ENCODE measurements at regions of chr18 and their contacts with region 1.

Region 1: DNA sequence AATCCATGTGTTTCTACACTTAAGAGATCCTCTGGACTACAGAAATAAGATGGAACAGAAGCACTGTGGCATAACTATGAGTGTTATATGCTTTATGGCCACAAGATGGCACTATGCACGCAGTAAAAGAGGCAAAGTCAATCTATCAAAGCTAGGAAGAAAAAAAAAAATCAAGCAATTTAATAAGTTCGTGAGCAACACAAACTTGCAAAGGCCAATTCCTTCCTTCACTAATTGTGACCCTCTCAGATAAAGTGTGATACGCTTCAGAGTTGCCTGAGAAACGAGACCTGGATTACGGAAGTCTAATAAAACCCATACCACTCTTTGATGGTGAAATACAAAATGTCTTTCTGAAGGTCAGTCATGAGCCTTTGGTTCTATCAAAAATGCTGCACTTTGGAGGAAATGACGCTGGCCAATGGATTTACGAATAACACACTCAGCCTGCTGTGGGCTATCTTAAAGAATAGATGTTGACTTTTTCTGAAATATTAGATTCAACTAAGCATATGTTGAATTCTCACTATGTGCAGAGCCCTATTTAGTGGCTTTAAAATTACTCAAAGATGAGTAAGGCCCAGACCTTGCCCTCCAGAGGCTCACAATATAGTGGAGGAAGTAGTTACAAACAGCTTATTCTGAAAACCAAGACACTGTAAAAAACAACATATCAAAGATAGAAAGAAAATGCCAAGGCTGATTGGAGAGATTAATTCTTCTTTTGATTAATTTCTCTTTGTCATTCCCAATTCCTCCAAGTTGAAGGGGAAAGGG is 35.5 kb upstream of the TTR start:
- DNase-seq: peak; percentile 48 to 74 (median 54)
- ATAC-seq: peak; percentile 89
- H3K4me3 ChIP-seq: no peak overlapping the region
- H3K27ac ChIP-seq: no peak overlapping the region
- H3K4me1 ChIP-seq: no peaks in the 10 kb centered on the region
- H3K27me3 ChIP-seq: no peaks in the 10 kb centered on the region
- CTCF ChIP-seq: peak; percentile 53 to 93 (median 84)
- POLR2A ChIP-seq: no peak

Region 2: DNA sequence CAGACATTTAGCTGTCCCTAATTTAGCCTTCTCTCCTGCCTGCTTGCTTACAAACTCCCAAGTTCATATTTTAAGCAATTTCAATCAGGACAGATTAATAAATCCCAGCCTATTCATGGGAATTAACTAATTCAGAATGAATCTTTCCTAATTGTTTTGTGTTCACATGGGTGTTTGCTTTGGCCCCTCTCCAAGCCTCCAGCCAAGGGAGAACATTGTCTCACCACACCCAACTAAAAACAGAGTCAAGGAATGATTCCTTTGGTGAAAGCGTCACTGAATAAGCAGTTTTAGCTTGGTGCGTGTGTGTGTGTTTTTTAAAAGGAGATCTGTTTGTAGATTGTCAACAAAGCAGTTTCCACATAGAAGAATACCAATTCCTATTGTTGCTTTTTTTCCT is 281.2 kb before region 1 on chr18:
- intact Hi-C with region 1: no loop called
- DNase-seq: peak; percentile 22 to 70 (median 42)
- ATAC-seq: peak; percentile 50
- H3K4me3 ChIP-seq: no peak overlapping the region
- H3K27ac ChIP-seq: peak overlapping the region in 2 of 4 donors; percentile 25 to 34
- H3K4me1 ChIP-seq: peaks cover 7% of the 10 kb centered on the region
- H3K27me3 ChIP-seq: no peaks in the 10 kb centered on the region
- CTCF ChIP-seq: no peak
- POLR2A ChIP-seq: no peak

Region 3: DNA sequence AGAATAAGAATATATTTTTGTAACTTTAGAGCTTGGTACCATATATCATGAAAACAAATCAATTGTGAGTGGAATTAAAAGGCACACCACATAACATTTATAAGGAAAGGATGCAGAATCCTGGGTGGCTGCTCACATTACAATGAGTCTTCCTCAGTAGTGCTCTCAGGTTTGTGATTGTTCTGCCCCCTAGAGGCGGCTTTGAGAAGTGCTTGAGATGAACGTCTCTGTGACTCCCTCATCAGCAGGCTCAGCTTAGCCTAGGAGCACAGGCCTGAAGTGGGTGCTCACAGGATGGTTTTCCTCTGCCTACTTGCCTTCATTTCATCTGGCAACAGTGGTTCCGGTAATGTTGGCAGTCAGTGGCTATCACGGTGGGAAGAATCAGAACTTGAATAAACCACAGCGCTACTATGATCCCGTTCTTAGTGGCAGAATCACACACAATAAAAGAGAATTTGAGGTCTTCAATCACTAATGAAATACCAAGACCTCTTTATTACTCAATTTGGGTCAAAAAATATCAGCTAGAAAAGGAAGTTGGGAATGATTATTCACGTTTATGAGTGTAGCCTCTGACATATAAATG is 166.3 kb after region 1 on chr18:
- intact Hi-C with region 1: loop called (anchors 10 kb)
- DNase-seq: peak; percentile 79 to 89 (median 84)
- ATAC-seq: peak; percentile 85
- H3K4me3 ChIP-seq: no peak overlapping the region
- H3K27ac ChIP-seq: no peak overlapping the region
- H3K4me1 ChIP-seq: peaks cover 8% of the 10 kb centered on the region
- H3K27me3 ChIP-seq: no peaks in the 10 kb centered on the region
- CTCF ChIP-seq: peak; percentile 61 to 90 (median 73)
- POLR2A ChIP-seq: no peak

Region 4: DNA sequence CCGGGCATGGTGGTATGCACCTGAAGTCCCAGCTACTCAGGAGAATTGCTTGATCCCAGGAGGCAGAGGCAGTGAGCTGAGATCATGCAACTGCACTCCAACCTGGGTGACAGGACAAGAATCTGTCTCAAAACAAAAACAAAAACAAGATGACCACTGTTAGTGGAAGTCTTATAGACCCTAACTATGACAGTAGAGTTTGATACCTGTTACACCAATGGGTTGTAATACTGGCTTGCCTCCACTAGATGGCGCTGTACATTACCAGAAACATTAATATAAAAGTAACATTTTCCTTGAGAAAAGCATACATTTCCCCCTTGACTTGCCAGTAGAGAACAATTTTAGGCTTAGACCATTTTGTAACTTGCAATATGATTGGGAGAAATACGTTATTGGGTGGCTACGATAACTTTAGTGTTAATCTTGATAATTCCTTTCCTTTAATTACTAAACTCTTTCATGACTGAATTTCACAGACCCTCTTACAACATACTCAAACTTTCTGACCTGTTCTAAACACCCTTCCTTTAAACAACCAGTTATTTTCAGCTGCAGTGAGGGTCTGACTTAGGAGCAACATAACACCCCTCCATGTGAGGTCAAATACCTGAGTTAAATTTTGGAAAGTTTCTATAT is 185.1 kb after region 1 on chr18:
- intact Hi-C with region 1: no loop called
- DNase-seq: peak; percentile 48 to 70 (median 54)
- ATAC-seq: peak; percentile 69
- H3K4me3 ChIP-seq: no peak overlapping the region
- H3K27ac ChIP-seq: no peak overlapping the region
- H3K4me1 ChIP-seq: peaks cover 14% of the 10 kb centered on the region
- H3K27me3 ChIP-seq: no peaks in the 10 kb centered on the region
- CTCF ChIP-seq: peak; percentile 65 to 84 (median 77)
- POLR2A ChIP-seq: no peak

Region 5: GRCh38 chr18:31819925-31820229 is 263.7 kb after region 1 on chr18:
- intact Hi-C with region 1: loop called (anchors 10 kb)
- DNase-seq: no peak
- ATAC-seq: no peak
- H3K4me3 ChIP-seq: no peak overlapping the region
- H3K27ac ChIP-seq: no peak overlapping the region
- H3K4me1 ChIP-seq: peaks cover 5% of the 10 kb centered on the region
- H3K27me3 ChIP-seq: no peaks in the 10 kb centered on the region
- CTCF ChIP-seq: no peak
- POLR2A ChIP-seq: no peak

Measured in body of pancreas (tissue), 4 donors.